Activated naive CD8-positive, alpha-beta T cell treated with anti-CD3 and anti-CD28 coated beads, Interleukin-2, amount 10 ng/mL, durations not matched to agents 7 days and 5 days (primary cell): ENCODE measurements at regions of chr2 and their contacts with region 1.

Region 1: DNA sequence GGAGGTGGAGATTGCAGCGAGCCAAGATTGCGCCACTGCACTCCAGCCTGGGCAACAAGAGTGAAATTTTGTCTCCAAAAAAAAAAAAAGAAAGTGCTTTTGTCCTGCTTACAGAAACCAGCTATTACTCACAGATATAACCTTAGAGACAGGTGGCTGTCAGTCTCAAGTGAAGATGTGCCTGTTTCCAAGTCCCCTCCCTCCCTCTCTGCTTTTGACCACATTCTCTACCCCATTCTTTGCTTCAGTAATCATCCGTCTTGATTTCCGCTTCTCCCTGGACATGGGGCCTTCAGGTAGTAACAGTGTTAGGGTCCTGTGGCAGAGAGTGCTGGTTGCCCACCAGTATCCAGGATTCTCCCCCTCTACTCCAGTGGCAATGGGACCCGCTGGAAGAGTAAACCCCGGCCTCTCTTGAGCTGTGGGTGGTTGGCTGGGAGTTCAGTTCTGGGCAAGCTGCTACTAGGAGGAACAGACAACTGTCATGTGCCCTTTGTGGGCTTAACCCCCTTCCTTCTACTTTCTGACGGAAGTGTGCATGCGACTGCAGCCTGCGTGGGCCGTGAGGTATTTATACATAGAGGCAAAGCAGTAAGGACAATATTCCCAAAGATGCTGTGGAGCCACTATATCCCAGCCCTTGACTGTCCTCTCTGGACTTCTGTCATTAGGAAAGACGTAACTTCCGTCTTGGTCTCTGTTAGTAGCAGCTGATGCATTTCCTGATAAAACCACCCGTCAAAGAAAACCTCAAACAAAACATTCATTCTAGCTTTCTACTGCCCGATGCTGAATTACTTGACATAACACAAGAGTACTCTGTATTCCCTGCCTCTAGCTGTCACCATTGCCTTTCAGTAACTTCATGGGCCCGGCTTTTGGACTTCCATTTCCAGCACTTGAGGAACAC is 17.8 kb downstream of the PDCL3 start:
- DNase-seq: peak; percentile 67
- ATAC-seq: peak; percentile 88
- H3K4me3 Mint-ChIP-seq: peak overlapping the region; percentile 41
- H3K27ac Mint-ChIP-seq: peak overlapping the region; percentile 98
- H3K4me1 Mint-ChIP-seq: peaks cover 43% of the 10 kb centered on the region
- H3K27me3 Mint-ChIP-seq: no peaks in the 10 kb centered on the region

Region 2: DNA sequence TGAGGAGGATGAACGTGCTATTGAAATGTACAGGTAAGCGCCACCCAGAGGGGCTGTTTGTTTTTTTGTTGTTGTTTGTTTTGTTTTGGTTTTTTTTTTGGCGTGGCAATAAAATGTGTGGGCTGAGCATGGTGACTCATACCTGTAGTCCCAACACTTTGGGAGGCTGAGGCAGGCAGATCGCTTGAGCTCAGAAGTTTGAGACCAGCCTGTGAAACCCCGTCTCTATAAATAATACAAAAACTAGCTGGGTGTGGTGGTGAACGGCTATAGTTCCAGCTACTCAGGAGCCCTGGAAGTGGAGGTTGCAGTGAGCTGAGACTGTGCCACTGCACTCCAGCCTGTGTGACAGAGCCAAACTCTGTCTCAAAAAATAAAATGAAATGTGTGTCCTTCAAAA is 11.6 kb before region 1 on chr2:
- POLR2A ChIA-PET with region 1: interaction called, 153 read pairs
- DNase-seq: no peak
- ATAC-seq: no peak
- H3K4me3 Mint-ChIP-seq: no peak overlapping the region
- H3K27ac Mint-ChIP-seq: no peak overlapping the region
- H3K4me1 Mint-ChIP-seq: peaks cover 17% of the 10 kb centered on the region
- H3K27me3 Mint-ChIP-seq: no peaks in the 10 kb centered on the region